Activated CD4-positive, alpha-beta T cell treated with anti-CD3 and anti-CD28 coated beads for 36 hours (primary cell): ENCODE measurements at regions of chr22 and their contacts with region 1.

Region 1: DNA sequence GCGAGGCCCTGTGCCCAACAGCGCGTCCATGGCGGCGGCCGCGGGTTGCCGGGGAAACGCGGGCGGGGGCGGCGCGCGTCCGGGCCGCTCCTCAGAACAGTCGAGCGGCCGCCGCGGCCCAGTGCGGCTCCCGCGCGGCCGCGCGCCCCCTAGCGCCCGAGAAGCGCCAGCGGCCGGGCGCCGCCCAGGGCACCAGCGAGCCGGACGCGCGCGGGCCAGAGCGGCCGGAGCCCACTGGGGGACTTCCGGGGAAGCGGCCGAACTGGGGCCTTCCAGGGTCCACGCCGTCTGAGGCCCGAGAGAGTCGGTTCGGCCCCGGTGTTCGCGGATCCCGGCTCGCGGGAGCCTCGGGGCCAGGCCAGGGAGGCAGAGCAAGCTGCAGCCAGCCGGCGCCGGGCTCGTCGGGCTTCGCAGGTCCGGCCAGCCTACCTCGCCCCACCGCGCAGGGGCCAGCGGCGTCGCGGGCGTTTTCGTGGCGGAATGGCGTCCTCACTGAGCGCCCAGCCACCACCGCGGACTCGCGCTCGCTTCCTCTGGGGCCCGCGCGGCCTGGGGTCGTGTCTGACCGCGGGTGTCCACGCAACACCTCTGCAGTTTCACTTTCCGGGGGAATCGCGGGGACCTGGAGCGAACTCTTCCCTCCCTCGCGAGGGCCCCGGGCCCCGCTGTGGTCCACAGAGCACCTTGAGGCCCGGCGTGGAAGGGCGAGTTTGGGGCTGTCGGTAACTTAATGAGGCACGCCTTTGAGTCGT is at the start of gene DENND6B:
- DNase-seq: peak; percentile 88
- ATAC-seq: peak; percentile 95
- H3K4me3 Mint-ChIP-seq: peak within 1 kb of the TSS; percentile 74
- H3K27ac Mint-ChIP-seq: peak within 1 kb of the TSS; percentile 63
- H3K4me1 Mint-ChIP-seq: peaks cover 14% of the 10 kb centered on the region
- H3K27me3 Mint-ChIP-seq: peaks cover 7% of the 10 kb centered on the region
- total RNA-seq, gene DENND6B: 2.8 TPM

Region 2: GRCh38 chr22:50061824-50062355 is 265.2 kb before region 1 on chr22:
- CTCF ChIA-PET with region 1: no interaction called
- POLR2A ChIA-PET with region 1: no interaction called
- intact Hi-C with region 1: no loop called
- DNase-seq: no peak
- ATAC-seq: no peak
- H3K4me3 Mint-ChIP-seq: no peak overlapping the region
- H3K27ac Mint-ChIP-seq: no peak overlapping the region
- H3K4me1 Mint-ChIP-seq: no peaks in the 10 kb centered on the region
- H3K27me3 Mint-ChIP-seq: peaks cover 12% of the 10 kb centered on the region

Region 3: DNA sequence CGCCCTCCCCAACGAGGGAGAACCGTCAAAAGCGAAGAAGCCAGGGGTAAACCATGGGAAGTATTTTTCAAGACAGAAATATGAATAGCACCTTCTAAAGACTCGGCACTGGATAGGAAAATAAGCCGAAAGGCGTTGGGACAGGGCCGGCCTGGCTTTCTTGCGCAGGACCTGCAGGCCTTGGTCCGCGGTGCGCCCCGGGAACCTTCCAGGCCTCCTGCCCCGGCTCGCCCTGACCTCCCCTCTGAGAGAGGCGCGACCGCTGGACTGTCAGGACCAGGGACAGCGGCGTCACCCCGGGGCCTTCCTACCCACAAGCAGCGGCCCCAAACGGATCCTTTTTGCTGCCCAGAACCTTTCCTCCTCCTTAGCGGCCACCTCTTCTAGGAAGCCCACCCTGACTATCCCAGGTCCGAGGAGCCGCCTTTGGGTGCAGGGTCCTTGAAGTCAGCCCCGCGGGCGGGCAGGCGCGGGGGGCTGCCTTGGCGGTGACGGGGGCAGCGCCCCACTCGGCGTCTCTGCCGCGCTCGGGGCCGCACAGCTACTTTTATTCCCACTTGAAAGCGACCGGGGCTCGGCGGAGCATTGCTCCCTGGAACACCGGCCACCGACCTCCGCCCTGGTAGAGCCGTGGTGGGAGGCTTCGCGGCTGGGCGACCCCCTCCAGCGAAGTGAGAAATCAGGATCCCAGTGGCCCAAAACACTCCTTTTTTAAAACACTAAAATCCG is 56.3 kb before region 1 on chr22:
- CTCF ChIA-PET with region 1: interaction called, 13 read pairs
- POLR2A ChIA-PET with region 1: no interaction called
- intact Hi-C with region 1: loop called (anchors 1 to 5 kb)
- DNase-seq: peak; percentile 86
- ATAC-seq: peak; percentile 46
- H3K4me3 Mint-ChIP-seq: peak overlapping the region; percentile 65
- H3K27ac Mint-ChIP-seq: no peak overlapping the region
- H3K4me1 Mint-ChIP-seq: peaks cover 13% of the 10 kb centered on the region
- H3K27me3 Mint-ChIP-seq: peaks cover 4% of the 10 kb centered on the region

Region 4: GRCh38 chr22:50276143-50276542 is 51.0 kb before region 1 on chr22:
- CTCF ChIA-PET with region 1: interaction called, 13 read pairs
- POLR2A ChIA-PET with region 1: no interaction called
- intact Hi-C with region 1: loop called (anchors 1 to 5 kb)
- DNase-seq: peak; percentile 81
- ATAC-seq: peak; percentile 70
- H3K4me3 Mint-ChIP-seq: no peak overlapping the region
- H3K27ac Mint-ChIP-seq: no peak overlapping the region
- H3K4me1 Mint-ChIP-seq: peaks cover 1% of the 10 kb centered on the region
- H3K27me3 Mint-ChIP-seq: peaks cover 2% of the 10 kb centered on the region